ENCODE measurements at regions of chr12 and their contacts with region 1.

Region 1: GRCh38 chr12:98698603-98699463 is 53.7 kb downstream of the APAF1 start:
- DNase-seq: peak; percentile 26
- H3K4me3 Mint-ChIP-seq: no peak overlapping the region
- H3K27ac Mint-ChIP-seq: no peak overlapping the region
- H3K4me1 Mint-ChIP-seq: peaks cover 21% of the 10 kb centered on the region
- H3K27me3 Mint-ChIP-seq: no peaks in the 10 kb centered on the region

Region 2: GRCh38 chr12:98544751-98545150 is 154.1 kb before region 1 on chr12:
- intact Hi-C with region 1: no loop called
- DNase-seq: no peak
- H3K4me3 Mint-ChIP-seq: no peak overlapping the region
- H3K27ac Mint-ChIP-seq: no peak overlapping the region
- H3K4me1 Mint-ChIP-seq: peaks cover 12% of the 10 kb centered on the region
- H3K27me3 Mint-ChIP-seq: no peaks in the 10 kb centered on the region

Region 3: DNA sequence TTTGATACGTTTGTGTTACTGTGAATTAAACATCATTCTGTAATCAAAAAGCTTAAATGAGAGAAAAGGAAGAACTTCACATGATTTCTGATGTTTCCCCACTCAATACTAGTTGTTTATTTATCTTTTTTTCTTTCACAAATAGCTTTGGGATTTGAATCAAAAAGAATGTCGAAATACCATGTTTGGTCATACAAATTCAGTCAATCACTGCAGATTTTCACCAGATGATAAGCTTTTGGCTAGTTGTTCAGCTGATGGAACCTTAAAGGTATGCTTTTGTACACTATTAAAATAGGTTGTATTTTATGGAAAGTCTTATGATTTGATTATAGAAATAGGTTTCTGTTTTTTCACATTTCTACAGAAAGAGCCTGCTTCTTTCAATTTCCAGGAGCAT is 12.2 kb before region 1 on chr12:
- intact Hi-C with region 1: no loop called
- DNase-seq: no peak
- H3K4me3 Mint-ChIP-seq: no peak overlapping the region
- H3K27ac Mint-ChIP-seq: no peak overlapping the region
- H3K4me1 Mint-ChIP-seq: peaks cover 6% of the 10 kb centered on the region
- H3K27me3 Mint-ChIP-seq: no peaks in the 10 kb centered on the region

Region 4: GRCh38 chr12:98939350-98939749 is 240.5 kb after region 1 on chr12:
- intact Hi-C with region 1: loop called (anchors 1 kb)
- DNase-seq: no peak
- H3K4me3 Mint-ChIP-seq: no peak overlapping the region
- H3K27ac Mint-ChIP-seq: no peak overlapping the region
- H3K4me1 Mint-ChIP-seq: no peaks in the 10 kb centered on the region
- H3K27me3 Mint-ChIP-seq: peaks cover 12% of the 10 kb centered on the region

Region 5: DNA sequence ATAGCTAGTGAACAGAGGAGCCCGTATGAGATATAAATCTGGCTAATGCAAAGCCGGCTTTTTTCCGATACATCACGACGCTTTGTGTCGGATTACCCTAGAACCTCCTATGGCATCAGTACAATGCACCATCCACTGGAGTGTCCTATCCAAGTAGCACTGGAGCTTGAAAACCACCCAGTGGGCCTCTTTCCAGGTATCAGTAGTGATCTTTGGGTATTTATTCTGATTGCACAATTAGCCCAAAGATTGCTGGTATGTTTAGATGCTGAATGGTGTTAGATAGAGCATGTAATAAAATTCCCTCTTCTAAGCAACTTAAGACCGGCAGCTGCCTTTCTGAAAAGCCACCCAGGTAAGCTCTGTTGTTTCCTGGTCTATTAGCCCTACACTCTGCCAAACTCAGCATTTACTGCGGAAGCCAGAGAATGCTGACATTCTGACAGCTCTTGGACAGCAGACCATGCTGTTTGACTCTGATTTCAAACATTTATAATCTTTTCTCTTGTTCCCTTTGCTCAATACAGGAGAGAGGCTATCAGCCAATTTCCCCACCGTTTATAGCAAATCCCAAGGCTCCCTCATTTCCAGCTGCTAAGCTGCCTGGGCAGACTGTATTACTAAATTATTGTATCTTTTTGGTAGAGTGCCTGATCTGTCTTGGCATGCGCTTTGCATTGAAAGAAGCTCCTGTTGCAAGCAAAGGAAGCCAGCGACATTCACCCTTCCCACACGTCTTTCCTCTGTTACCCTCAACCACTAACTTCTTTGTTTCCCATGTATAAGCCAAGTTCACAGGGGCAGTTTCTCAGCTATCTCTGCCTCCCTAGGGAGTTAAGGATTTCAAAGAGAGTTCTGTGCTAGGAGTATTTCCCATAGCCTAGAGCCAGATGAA is 560.5 kb after region 1 on chr12:
- intact Hi-C with region 1: no loop called
- DNase-seq: no peak
- H3K4me3 Mint-ChIP-seq: no peak overlapping the region
- H3K27ac Mint-ChIP-seq: no peak overlapping the region
- H3K4me1 Mint-ChIP-seq: no peaks in the 10 kb centered on the region
- H3K27me3 Mint-ChIP-seq: no peaks in the 10 kb centered on the region

Measured in activated T-helper 1 cell treated with anti-CD3 and anti-CD28 coated beads, Interleukin-12 subunit alpha, Interleukin-12 subunit beta, Interleukin-2, Interleukin-4 antibody, amounts not matched to agents 30 ng/mL and 10 ng/mL and 1 ng/mL, durations not matched to agents 14 hours and 24 hours and 36 hours (primary cell).